Activated B cell treated with CpG ODN at 0.5 μM for 24 hours (primary cell): ENCODE measurements at regions of chr6 and their contacts with region 1.

Region 1: DNA sequence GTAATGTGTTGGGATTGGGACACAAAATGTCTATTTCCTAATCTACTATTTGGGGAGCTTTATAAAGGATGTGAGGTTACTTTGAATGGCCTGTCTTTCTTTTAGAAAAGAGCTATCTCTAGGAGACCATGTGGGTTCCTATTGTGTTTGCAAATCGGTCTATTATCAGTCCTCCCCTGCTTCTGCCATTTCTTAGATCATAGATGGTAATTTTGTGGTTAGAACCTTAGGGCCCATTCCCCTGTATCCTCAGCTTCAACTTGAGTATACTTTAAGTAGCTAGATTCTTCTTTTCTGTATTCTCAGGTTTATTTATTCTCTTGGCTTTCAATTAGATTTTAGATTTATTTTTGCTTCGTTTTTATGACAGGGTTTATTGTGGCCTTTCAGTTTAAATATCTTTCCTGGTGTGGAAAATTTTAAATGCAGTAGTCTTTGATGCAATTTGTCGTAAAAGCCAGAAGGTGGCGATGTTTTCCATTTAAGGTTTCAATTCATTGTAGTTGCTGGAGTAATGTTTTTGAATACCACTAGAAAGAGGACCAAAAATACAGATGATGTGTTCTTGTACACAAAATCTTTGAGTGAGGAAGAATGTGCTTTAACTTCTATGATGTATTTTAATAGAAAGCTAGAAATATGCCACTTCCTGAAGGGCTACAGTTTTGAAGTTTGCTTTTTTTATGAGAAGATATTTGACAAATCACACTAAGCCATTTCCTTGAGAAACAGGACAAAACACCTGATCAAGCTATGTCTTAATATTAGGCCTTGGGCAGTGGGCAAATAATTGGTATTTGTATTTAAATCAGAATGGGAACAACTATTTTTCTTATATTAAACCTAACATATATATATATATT is 20.3 kb downstream of the TBPL1 start:
- DNase-seq: no peak
- ATAC-seq: peak; percentile 61
- H3K4me3 Mint-ChIP-seq: no peak overlapping the region
- H3K27ac Mint-ChIP-seq: no peak overlapping the region
- H3K4me1 Mint-ChIP-seq: peaks cover 21% of the 10 kb centered on the region
- H3K27me3 Mint-ChIP-seq: no peaks in the 10 kb centered on the region
- CTCF ChIP-seq: peak; percentile 86

Region 2: DNA sequence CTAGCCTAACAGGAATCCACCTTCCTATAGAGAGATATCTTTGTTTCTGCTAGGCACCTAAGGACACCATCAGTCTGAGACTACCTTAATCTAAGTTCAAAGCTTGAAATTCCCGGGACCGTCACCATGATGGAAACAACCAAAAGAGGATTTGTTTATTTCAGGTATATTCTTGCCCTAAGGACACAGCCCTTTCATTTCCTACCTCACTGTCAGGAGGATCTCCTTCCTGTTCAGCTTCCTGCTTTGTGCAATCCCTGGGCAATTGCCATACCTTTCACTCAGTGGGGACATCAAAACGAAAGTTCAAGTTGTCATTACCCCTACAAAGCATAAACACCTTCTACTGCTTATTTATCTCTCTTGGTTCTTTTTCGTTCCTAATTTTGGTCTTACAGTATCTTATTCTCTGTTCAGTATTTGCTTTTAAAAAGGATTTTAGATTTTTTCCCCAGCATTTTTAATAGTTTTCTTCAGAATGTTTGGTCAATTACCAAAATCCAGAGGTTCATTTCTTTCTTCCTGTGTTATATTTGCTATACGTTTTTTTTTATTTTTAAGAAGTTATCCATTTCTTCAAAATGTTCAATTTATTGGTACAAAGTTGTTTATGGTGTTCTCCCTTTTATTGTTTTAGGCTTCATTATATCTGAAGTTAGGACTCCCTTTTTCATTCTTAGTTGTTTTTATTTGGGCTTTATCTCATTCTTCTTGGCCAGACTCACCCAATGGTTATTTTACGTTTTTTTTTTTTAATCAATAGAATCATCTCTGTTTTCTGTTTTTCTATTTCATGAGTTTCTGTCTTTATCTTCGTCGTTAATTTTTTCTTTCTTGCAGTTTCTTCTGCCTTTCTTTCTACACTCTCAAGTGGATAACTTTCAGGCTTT is 33.3 kb before region 1 on chr6:
- CTCF ChIA-PET with region 1: no interaction called
- POLR2A ChIA-PET with region 1: no interaction called
- intact Hi-C with region 1: no loop called
- DNase-seq: no peak
- ATAC-seq: no peak
- H3K4me3 Mint-ChIP-seq: no peak overlapping the region
- H3K27ac Mint-ChIP-seq: no peak overlapping the region
- H3K4me1 Mint-ChIP-seq: no peaks in the 10 kb centered on the region
- H3K27me3 Mint-ChIP-seq: peaks cover 12% of the 10 kb centered on the region
- CTCF ChIP-seq: no peak

Region 3: GRCh38 chr6:134063966-134064445 is 90.7 kb after region 1 on chr6:
- CTCF ChIA-PET with region 1: interaction called, 28 read pairs
- POLR2A ChIA-PET with region 1: no interaction called
- intact Hi-C with region 1: loop called (anchors 1 kb)
- DNase-seq: no peak
- ATAC-seq: peak; percentile 94
- H3K4me3 Mint-ChIP-seq: no peak overlapping the region
- H3K27ac Mint-ChIP-seq: no peak overlapping the region
- H3K4me1 Mint-ChIP-seq: peaks cover 2% of the 10 kb centered on the region
- H3K27me3 Mint-ChIP-seq: peaks cover 3% of the 10 kb centered on the region
- CTCF ChIP-seq: peak; percentile 16